Right lobe of liver (tissue), 6 donors: ENCODE measurements at regions of chr2 and their contacts with region 1.

Region 1: DNA sequence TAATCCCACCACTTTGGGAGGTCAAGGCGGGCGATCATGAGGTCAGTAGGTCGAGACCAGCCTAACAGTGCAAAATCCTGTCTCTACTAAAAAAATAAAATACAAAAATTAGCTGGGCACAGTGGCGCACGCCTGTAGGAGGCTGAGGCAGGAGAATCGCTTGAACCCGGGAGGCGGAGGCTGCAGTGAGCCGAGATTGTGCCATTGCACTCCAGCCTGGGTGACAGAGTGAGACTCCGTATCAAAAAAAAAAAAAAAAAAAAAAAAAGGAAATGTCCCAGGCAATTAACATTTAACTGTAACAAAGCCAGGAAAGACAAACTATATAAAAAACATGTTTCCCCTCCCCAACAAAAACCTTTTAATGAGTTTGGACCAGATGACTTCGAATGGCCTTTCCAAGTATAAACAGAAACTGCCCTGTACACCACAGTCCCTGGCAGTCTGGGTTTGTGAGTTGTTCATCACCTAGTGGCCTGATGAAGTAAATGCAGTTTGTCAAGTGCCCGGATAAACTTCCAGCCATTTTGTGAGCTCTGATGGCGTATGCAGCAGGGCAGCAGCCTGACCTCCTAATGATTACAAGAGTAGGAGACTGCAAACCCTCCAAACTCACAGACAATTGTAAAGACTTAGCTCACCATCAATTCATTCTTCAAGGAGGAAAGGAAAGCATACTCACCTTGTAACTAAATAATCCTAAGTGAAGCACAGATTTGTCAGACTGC is 16.6 kb upstream of the PCBP1 start:
- DNase-seq: peak in 2 of 3 donors; percentile 38 to 78
- ATAC-seq: peak; percentile 81 to 93 (median 90)
- H3K4me3 ChIP-seq: no peak overlapping the region
- H3K27ac ChIP-seq: peak overlapping the region; percentile 84 to 96 (median 85)
- H3K4me1 ChIP-seq: peaks cover 0 to 25% (median 8%) of the 10 kb centered on the region in 4 donors
- H3K27me3 ChIP-seq: no peaks in the 10 kb centered on the region
- CTCF ChIP-seq: peak; percentile 77 to 93 (median 79)
- POLR2A ChIP-seq: no peak

Region 2: GRCh38 chr2:69914170-69914960 is 156.3 kb before region 1 on chr2:
- intact Hi-C with region 1: loop called (anchors 10 kb)
- DNase-seq: peak; percentile 98 to 100 (median 100)
- ATAC-seq: peak; percentile 85 to 95 (median 90)
- H3K4me3 ChIP-seq: peak overlapping the region; percentile 60 to 64 (median 62)
- H3K27ac ChIP-seq: peak overlapping the region; percentile 98 to 100 (median 100)
- H3K4me1 ChIP-seq: peaks cover 0 to 6% (median 3%) of the 10 kb centered on the region in 4 donors
- H3K27me3 ChIP-seq: no peaks in the 10 kb centered on the region
- CTCF ChIP-seq: peak; percentile 5 to 50 (median 28)
- POLR2A ChIP-seq: peak; percentile 88

Region 3: GRCh38 chr2:69933839-69934613 is 136.7 kb before region 1 on chr2:
- intact Hi-C with region 1: loop called in 1 of 2 experiments (anchors 10 kb)
- DNase-seq: no peak
- ATAC-seq: peak; percentile 40 to 87 (median 70)
- H3K4me3 ChIP-seq: no peak overlapping the region
- H3K27ac ChIP-seq: peak overlapping the region in 1 of 3 donors; percentile 25
- H3K4me1 ChIP-seq: peaks cover 0 to 12% (median 0%) of the 10 kb centered on the region in 4 donors
- H3K27me3 ChIP-seq: no peaks in the 10 kb centered on the region
- CTCF ChIP-seq: no peak
- POLR2A ChIP-seq: no peak

Region 4: DNA sequence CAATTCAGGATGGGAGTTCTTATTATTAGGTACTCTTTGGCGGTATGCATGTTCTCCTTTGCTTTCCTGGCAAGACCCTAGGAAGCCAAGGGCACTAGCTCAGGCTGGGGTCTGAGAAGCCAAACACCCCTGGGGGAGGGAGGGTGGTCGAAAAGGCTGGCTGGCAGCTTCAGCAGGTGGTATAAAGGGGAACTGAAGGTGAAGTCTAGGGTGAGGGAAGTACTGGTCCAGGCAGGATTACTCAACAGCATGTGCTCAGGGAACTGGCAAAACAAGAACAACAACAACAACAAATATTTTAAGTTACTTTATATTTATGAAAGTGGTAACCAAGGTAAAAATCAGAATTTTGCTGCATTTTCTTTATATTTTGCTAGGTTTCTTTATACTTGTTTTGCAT is 24.2 kb before region 1 on chr2:
- intact Hi-C with region 1: loop called in 1 of 2 experiments (anchors 2 kb)
- DNase-seq: peak in 1 of 3 donors; percentile 49
- ATAC-seq: peak; percentile 35 to 49 (median 39)
- H3K4me3 ChIP-seq: no peak overlapping the region
- H3K27ac ChIP-seq: peak overlapping the region in 1 of 3 donors; percentile 35
- H3K4me1 ChIP-seq: no peaks in the 10 kb centered on the region
- H3K27me3 ChIP-seq: no peaks in the 10 kb centered on the region
- CTCF ChIP-seq: no peak
- POLR2A ChIP-seq: no peak

Region 5: GRCh38 chr2:70199326-70199864 is 128.7 kb after region 1 on chr2:
- intact Hi-C with region 1: no loop called
- DNase-seq: no peak
- ATAC-seq: no peak
- H3K4me3 ChIP-seq: no peak overlapping the region
- H3K27ac ChIP-seq: no peak overlapping the region
- H3K4me1 ChIP-seq: peaks cover 0 to 20% (median 3%) of the 10 kb centered on the region in 4 donors
- H3K27me3 ChIP-seq: no peaks in the 10 kb centered on the region
- CTCF ChIP-seq: no peak
- POLR2A ChIP-seq: no peak

Region 6: GRCh38 chr2:70596739-70597138 is 526.0 kb after region 1 on chr2:
- intact Hi-C with region 1: no loop called
- DNase-seq: no peak
- ATAC-seq: no peak
- H3K4me3 ChIP-seq: no peak overlapping the region
- H3K27ac ChIP-seq: no peak overlapping the region
- H3K4me1 ChIP-seq: no peaks in the 10 kb centered on the region
- H3K27me3 ChIP-seq: no peaks in the 10 kb centered on the region
- CTCF ChIP-seq: no peak
- POLR2A ChIP-seq: no peak